Thyroid gland (tissue), 4 donors: ENCODE measurements at regions of chr4 and their contacts with region 1.

Region 1: DNA sequence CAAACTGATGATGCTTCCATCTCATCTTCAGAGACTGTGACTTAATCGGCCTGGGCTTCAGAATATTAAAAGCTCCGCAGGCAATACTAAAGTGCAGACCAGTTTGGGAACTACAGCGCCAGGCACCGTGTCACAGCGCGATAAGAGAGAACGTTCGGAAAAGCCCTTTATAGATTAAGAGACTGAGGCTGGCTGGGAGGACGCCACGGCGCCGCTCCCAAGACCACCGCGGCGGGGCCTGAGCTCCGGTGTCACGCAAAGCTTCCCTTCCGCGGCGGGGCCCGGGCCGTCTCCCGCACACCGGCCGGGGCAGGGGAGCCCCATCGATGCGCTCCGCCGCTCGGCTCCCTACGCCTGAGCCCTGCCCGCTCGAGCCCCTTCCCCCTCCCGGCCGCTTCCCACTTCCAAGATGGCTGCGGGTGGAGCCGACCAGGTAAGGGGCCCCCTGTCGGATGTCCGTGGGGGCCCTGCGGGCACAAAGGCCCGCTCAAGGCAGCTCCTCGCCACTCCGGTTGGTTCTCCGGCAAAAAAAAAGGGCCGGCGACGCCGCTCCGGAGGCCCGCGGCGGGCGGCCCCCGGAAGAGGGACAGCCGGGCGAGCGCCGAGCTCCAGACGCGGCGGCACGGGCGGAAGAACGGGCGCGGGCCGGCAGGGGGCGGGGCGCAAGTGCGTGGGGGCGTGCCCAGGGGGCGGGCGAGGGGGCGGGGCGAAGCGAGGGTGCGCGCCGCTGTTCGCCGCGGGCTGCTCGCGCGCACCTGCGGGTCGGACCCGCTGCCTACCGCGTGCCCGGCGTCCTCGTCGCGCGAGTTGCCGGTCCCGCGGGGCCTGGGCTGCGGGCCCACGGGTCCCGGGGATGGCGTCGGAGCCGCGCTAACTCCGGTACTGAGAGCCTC is at the start of gene TBC1D14:
- DNase-seq: peak; percentile 89 to 90
- H3K4me3 ChIP-seq: peak within 1 kb of the TSS; percentile 31 to 80 (median 59)
- H3K27ac ChIP-seq: peak within 1 kb of the TSS; percentile 96 to 98 (median 98)
- H3K4me1 ChIP-seq: peaks cover 9 to 35% of the 10 kb centered on the region in 2 donors
- H3K27me3 ChIP-seq: no peaks in the 10 kb centered on the region
- CTCF ChIP-seq: peak in 2 of 6 experiments; percentile 11 to 35
- POLR2A ChIP-seq: peak in 1 of 2 donors; percentile 61
- total RNA-seq, gene TBC1D14: 39.8 to 47.0 (median 46.0) TPM

Region 2: DNA sequence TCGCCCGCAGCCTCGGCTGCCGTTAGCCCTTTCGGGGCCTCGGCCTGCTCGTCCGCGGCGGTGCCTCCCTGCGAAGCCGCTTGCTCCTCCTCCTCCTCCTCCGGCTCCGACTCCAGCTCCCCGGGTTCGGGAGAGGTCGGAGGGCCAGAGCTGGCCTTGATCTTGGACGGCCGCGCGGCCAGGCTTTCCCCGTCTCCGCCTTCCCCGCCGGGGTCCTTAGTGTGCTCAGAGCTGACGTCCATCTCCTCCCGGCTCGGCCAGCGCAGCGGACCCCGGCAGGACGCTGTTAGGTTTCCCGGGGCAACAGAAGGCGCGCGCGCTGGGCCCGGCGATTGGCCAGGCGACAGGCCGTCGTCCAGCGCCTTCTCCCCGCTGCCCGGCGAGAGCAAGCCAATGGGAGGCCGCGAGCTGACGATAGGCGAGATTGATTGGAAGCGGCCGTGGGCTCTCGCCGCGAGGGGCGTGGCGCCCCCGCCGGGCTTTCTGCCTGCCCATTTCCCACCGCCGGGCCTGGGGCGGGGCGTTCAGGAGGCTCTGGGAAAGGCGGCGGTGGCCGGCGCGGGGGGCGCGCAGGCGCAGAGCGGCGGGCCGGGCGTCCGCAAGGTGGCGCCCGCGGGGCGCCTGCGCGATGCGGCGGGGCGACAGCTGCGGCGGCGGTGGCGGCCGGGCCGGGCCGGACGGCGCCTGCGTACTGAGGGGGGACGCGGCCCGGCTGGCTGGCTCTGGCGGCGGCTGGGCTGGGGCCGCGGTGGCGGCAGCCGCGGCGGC is 133.6 kb after region 1 on chr4 and contains the start of gene TADA2B:
- intact Hi-C with region 1: loop called (anchors 10 kb)
- DNase-seq: peak; percentile 98
- H3K4me3 ChIP-seq: peak within 1 kb of the TSS; percentile 60 to 96 (median 88)
- H3K27ac ChIP-seq: peak within 1 kb of the TSS; percentile 59 to 78 (median 76)
- H3K4me1 ChIP-seq: peaks cover 32 to 38% of the 10 kb centered on the region in 2 donors
- H3K27me3 ChIP-seq: no peaks in the 10 kb centered on the region
- CTCF ChIP-seq: peak in 3 of 6 experiments; percentile 56 to 83 (median 69)
- POLR2A ChIP-seq: peak in 1 of 2 donors; percentile 45
- total RNA-seq, gene TADA2B: 17.9 to 34.1 (median 26.6) TPM